Caco-2 (cell line): ENCODE measurements at regions of chr2 and their contacts with region 1.

Region 1: DNA sequence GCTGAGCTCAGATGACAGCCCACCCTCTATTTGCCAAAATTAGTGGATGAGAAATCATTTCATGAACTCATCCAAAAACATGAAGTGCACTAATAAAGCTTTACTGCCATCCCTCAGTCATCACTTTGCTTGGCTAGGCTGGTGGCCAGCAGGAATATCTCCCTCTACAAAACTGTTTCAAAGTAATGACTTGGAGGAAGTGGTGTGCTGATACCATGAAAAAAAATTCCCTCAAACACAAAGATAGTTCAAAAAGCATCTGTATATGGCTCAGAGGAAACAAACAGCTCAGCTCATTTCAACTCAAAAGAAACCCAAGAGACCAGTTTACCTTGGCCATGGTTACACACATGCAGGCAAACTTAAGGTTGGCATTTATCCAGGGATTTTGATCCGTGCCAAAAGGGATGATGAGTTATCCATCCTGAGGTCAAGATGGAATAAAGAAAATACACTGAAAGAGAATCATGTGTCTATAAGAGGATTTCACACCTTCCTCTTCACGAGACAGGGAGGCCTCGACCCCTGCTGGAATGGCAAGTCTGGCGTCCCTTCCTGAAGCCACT is 18.4 kb upstream of the WIPF1 start:
- DNase-seq: no peak
- H3K4me3 ChIP-seq: no peak overlapping the region
- H3K4me3 Mint-ChIP-seq: no peak overlapping the region
- H3K27ac Mint-ChIP-seq: no peak overlapping the region
- H3K4me1 ChIP-seq: no peaks in the 10 kb centered on the region
- H3K4me1 Mint-ChIP-seq: no peaks in the 10 kb centered on the region
- H3K27me3 ChIP-seq: no peaks in the 10 kb centered on the region
- H3K27me3 Mint-ChIP-seq: no peaks in the 10 kb centered on the region
- CTCF ChIP-seq: no peak

Region 2: GRCh38 chr2:174631009-174631981 is 15.3 kb after region 1 on chr2:
- CTCF ChIA-PET with region 1: no interaction called
- POLR2A ChIA-PET with region 1: no interaction called
- intact Hi-C with region 1: loop called (anchors 2 kb)
- DNase-seq: no peak
- H3K4me3 ChIP-seq: no peak overlapping the region
- H3K4me3 Mint-ChIP-seq: no peak overlapping the region
- H3K27ac Mint-ChIP-seq: no peak overlapping the region
- H3K4me1 ChIP-seq: no peaks in the 10 kb centered on the region
- H3K4me1 Mint-ChIP-seq: no peaks in the 10 kb centered on the region
- H3K27me3 ChIP-seq: no peaks in the 10 kb centered on the region
- H3K27me3 Mint-ChIP-seq: no peaks in the 10 kb centered on the region
- CTCF ChIP-seq: no peak

Region 3: GRCh38 chr2:174682578-174683391 is 66.8 kb after region 1 on chr2:
- CTCF ChIA-PET with region 1: interaction called, 5 read pairs
- POLR2A ChIA-PET with region 1: no interaction called
- intact Hi-C with region 1: loop called (anchors 1 kb)
- DNase-seq: peak in 1 of 2 experiments; percentile 58
- H3K4me3 ChIP-seq: peak overlapping the region; percentile 60
- H3K4me3 Mint-ChIP-seq: peak overlapping the region; percentile 85
- H3K27ac Mint-ChIP-seq: peak overlapping the region; percentile 40
- H3K4me1 ChIP-seq: 0 out of 2 replicates have a peak, but pooled peaks cover 11% of the 10 kb centered on the region
- H3K4me1 Mint-ChIP-seq: peaks cover 15% of the 10 kb centered on the region
- H3K27me3 ChIP-seq: no peaks in the 10 kb centered on the region; the same call in 1 of the 2 replicates
- H3K27me3 Mint-ChIP-seq: peaks cover 9% of the 10 kb centered on the region
- CTCF ChIP-seq: no peak